Aorta (tissue), 5 donors: ENCODE measurements at regions of chr15 and their contacts with region 1.

Region 1: DNA sequence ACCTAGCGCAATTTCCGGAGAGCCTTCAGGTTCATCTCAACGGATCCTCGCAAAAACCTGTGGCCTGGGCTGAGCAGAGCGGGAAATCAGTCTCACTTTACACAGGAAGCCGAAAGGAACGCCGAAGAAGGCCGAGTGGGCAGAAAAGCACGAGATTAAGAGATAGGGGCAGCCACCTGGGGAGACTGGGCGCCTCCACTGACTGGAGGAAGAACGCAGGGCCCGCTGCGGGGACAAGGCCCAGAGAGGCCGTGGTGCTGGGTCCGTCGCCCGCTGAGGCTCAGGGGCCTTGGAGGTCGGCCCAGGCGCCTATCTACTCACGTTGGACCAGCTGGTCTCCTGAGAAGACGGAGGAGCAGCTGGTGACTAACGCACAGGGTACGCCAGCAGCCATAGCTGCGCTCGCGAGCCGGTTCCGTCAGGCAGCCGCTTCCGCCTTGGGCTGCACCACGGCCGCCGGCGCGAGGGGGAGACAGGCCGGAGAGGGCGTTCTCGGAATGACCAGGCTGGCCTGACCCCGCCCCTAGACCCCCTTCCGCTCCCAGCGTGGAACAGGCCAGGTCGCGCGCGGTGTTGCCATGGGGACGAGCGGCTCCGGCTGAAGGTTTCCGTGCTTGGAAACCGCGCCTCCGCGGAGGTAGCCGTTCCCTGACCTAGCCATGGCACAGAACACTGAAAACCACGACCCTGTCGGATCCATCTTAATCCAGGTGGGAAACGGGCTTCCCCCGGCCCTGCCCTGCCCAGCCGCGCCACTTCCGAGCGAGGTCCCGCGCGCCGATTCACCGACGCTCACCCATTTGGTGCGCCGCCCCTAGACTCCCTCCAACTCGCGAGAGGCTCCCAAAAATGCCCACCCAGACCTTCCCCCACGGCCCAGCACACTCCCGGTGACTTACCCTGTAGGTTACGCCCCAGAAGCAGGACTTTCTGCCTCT is at the starts of genes AAGAB and IQCH:
- DNase-seq: peak; percentile 99 to 100
- ATAC-seq: peak; percentile 100
- H3K4me3 ChIP-seq: peak within 1 kb of the TSS; percentile 74 to 95
- H3K27ac ChIP-seq: peak within 1 kb of the TSS in 1 of 2 donors; percentile 90
- H3K4me1 ChIP-seq: no peaks in the 10 kb centered on the region
- H3K27me3 ChIP-seq: no peaks in the 10 kb centered on the region
- total RNA-seq, gene AAGAB: 24.3 to 24.5 TPM
- total RNA-seq, gene IQCH: 2.0 to 3.4 TPM

Region 2: DNA sequence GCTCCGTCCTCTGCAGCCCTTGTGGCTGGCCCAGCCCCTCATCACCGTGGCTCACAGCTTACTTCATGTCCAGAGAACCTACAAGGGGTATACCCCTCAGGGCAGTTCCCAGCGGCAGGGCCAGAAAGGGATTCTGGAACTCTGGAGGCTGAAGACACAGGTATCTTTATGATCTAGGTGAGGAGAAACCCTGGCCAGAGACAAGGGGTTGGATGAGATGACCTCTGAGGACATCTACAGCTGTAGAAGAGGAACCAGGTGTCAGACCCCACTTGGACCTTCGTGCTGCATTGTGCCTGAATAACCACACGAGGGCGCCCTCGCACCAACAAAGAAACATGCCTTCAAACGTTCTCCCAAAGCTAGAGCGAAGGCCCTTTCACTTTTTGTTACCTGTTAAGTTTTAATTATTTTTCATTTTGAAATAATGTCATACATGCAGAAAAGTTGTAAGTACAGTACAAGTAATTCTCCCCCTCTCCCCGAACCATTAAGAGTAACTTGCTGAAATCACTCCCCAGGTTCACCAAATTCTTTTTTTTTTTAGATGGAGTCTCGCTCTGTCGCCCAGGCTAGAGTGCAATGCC is 307.8 kb before region 1 on chr15:
- intact Hi-C with region 1: loop called in 1 of 2 experiments (anchors 5 kb)
- DNase-seq: peak; percentile 68 to 87
- ATAC-seq: peak; percentile 69
- H3K4me3 ChIP-seq: no peak overlapping the region
- H3K27ac ChIP-seq: no peak overlapping the region
- H3K4me1 ChIP-seq: no peaks in the 10 kb centered on the region
- H3K27me3 ChIP-seq: no peaks in the 10 kb centered on the region

Region 3: GRCh38 chr15:67065444-67066093 is 188.9 kb before region 1 on chr15 and contains the start of gene SMAD3:
- intact Hi-C with region 1: loop called in 1 of 2 experiments (anchors 5 kb)
- DNase-seq: peak; percentile 95 to 96
- ATAC-seq: peak; percentile 94
- H3K4me3 ChIP-seq: peak within 1 kb of the TSS; percentile 69 to 94
- H3K27ac ChIP-seq: peak within 1 kb of the TSS; percentile 57 to 97
- H3K4me1 ChIP-seq: peaks cover 0 to 13% of the 10 kb centered on the region in 2 donors
- H3K27me3 ChIP-seq: no peaks in the 10 kb centered on the region
- total RNA-seq, gene SMAD3: 65.9 to 90.8 TPM

Region 4: DNA sequence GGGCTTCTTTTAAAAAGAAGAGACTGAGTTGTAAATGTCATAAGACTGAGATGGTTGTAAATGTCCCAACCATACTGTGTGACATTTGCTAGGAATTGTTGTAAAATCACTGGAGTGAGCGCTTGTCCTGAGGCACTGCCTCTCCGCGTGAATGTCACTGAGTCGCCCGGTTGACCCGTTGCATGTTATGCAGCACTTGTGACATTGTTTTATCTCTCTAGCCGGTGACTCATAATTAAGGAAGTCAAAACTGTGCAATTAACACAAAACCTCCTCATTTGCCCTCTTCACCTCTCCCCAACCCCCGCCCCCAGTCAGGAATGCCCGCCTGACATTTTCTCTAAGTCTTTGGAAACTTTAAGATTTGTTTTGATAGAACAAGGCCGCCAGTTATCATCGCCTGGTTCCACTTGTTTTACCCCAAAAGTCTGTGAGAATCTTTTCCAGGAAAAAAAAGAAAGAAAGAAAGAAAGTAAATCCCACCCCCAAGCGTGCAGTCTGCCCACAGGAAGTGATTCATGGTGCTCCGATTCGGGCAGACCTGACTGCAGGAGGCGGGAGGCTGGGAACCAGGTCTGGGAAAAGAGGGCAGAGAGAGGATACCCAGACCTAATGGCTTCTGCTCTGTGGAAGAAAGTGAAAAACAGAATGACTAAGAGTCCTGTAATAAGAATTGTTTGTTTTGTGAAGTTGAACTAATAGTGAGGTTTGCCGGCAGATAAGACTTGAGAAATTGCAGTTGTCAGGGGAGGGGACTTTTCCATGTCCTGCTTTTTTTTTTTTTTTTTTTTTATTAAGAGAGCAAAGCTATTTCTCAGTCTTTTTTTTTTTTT is 104.3 kb before region 1 on chr15:
- intact Hi-C with region 1: loop called in 1 of 2 experiments (anchors 10 kb)
- DNase-seq: peak; percentile 91
- ATAC-seq: peak; percentile 87
- H3K4me3 ChIP-seq: no peak overlapping the region
- H3K27ac ChIP-seq: peak overlapping the region in 1 of 2 donors; percentile 72
- H3K4me1 ChIP-seq: peaks cover 10 to 12% of the 10 kb centered on the region in 2 donors
- H3K27me3 ChIP-seq: no peaks in the 10 kb centered on the region

Region 5: DNA sequence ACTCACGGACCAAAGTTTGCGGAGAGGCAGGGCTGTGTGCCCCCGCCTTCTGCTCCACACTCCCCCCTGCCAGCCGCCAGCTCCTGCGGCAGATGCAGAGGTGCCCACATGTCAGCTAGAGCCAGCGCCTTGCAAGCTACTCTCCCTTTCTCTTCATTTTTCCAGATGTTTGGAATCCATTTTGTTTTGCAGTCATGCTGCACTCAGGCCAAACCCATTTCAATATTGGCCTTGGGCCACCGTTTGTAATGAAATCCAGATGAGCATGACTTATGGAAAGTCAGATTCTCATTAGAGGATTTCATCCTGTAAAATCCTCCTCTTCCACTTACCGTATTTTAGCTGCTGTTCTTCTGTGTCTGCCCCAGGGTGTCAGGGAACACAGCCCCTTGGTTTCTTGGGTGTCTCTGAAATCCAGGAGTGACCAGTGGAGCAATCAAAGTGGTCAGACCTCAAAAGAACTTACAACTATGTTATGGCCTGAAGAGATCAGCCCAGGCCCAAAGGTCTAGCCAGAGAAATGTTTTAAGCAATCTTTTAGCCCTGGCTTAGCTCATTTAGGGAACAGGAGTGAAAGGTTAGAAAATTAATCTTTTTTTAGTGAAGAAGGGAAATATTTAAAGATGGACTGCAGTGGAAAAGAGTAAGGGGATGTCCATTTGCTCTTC is 65.8 kb before region 1 on chr15:
- intact Hi-C with region 1: loop called in 1 of 2 experiments (anchors 5 kb)
- DNase-seq: no peak
- ATAC-seq: peak; percentile 20
- H3K4me3 ChIP-seq: no peak overlapping the region
- H3K27ac ChIP-seq: peak overlapping the region; percentile 31 to 93
- H3K4me1 ChIP-seq: no peaks in the 10 kb centered on the region
- H3K27me3 ChIP-seq: no peaks in the 10 kb centered on the region